IMR-90 (cell line): ENCODE measurements at regions of chr3 and their contacts with region 1.

Region 1: DNA sequence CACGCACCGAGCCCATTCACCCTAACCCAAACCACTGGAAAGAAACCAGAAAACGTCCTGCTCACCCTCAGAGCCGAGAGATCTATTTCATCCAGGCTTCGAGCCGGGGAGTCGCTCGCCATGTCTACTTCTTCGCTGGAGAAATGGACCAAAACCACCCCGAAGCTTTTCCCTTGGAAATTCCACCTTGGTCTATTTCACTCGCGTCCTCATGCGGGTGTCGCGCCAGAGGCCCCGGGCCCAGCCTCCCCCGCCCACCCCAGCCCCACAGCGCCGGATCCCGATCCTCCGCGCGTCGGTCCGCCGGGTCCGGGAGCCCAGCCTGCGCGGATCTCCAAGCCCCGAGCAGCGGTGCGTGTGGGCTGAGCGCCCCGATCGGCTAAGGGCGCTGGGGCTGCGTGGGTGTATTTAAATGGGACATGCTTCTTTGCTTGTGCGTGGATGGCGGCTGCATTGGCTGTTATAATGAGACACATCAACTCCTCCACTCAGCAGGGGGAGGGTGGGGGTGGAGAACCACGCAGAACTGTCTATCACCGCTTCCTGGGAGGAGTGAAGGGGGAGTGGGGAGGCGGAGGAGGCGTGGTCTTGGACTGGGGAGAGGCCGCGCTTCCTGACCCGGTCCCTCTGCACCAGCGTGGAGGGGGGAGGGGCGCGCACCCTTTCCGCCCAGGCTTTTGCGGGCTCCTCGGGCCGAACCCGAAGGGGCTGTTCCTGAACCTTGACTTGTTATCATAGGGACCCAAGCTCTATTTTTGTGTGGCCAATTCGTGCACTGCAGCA is at the start of gene TNIK:
- DNase-seq: peak; percentile 89
- ATAC-seq: peak; percentile 94
- H3K4me3 ChIP-seq: peak within 1 kb of the TSS; percentile 86
- H3K27ac ChIP-seq: peak within 1 kb of the TSS; percentile 62
- H3K4me1 ChIP-seq: peaks cover 3% of the 10 kb centered on the region
- H3K27me3 ChIP-seq: no peaks in the 10 kb centered on the region
- CTCF ChIP-seq: 0 out of 2 replicates have a peak, but pooled peaks have one; percentile 10
- POLR2A ChIP-seq: no peak; the same call in 1 of the 2 replicates
- RAD21 ChIP-seq: no peak; the same call in 1 of the 2 replicates
- total RNA-seq, gene TNIK: 6.3 and 8.3 TPM in 2 replicates

Region 2: DNA sequence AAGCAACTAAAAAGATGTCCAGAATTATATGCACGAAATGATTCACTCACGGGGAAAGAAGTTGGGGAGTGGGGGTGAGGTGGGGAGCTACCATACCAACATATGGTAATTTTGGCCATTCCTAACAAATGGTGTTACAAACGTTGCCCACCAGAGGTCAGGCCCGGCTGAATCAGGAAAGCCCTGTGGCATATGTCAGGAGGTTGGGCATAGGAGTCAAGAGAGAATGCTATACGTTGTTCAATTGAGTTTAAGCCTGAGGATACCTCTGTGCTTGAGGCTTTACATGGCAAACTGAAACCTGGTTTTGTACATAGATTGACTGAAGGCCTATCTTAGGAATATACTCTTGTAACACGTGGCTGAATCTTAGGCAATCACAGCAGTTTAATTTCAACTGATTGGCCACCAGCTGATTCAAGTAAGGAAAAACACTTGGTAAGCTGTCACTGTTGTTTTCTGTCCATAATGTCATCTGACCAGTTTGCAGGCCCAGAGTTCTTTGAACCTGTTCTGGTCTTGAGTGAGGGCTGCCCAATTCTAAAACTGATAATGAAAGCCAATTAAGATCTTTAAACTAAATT is 410.2 kb before region 1 on chr3:
- CTCF ChIA-PET with region 1: no interaction called
- POLR2A ChIA-PET with region 1: no interaction called
- dilution Hi-C with region 1: no loop called
- in situ Hi-C with region 1: no loop called
- intact Hi-C with region 1: loop called (anchors 5 kb)
- DNase-seq: peak; percentile 61
- ATAC-seq: peak; percentile 91
- H3K4me3 ChIP-seq: no peak overlapping the region
- H3K27ac ChIP-seq: no peak overlapping the region
- H3K4me1 ChIP-seq: peaks cover 4% of the 10 kb centered on the region; the same call in 1 of the 2 replicates
- H3K27me3 ChIP-seq: no peaks in the 10 kb centered on the region
- CTCF ChIP-seq: peak; percentile 76
- POLR2A ChIP-seq: no peak
- RAD21 ChIP-seq: peak; percentile 84

Region 3: DNA sequence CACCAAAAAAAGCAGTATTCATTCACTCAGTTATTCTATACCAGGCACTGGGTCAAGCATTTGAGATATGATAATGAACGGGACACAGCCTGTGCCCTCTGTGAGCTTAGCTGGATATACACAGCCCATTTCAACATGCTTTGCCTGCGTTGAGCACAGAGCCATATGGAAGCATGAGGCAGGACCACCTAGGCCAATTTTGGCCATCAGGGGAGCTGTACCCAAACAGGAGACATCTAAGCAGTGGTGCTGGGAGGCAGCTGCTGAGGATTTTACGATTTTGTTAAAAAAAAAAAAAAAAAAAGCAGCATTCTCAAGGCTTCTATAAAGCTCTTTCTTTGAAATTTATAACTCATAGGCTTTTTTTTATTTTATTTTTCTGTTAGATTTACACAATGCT is 346.4 kb before region 1 on chr3:
- CTCF ChIA-PET with region 1: no interaction called
- POLR2A ChIA-PET with region 1: no interaction called
- dilution Hi-C with region 1: no loop called
- in situ Hi-C with region 1: no loop called
- intact Hi-C with region 1: no loop called
- DNase-seq: no peak
- ATAC-seq: no peak
- H3K4me3 ChIP-seq: no peak overlapping the region
- H3K27ac ChIP-seq: no peak overlapping the region
- H3K4me1 ChIP-seq: no peaks in the 10 kb centered on the region
- H3K27me3 ChIP-seq: no peaks in the 10 kb centered on the region
- CTCF ChIP-seq: no peak
- POLR2A ChIP-seq: no peak
- RAD21 ChIP-seq: no peak

Region 4: DNA sequence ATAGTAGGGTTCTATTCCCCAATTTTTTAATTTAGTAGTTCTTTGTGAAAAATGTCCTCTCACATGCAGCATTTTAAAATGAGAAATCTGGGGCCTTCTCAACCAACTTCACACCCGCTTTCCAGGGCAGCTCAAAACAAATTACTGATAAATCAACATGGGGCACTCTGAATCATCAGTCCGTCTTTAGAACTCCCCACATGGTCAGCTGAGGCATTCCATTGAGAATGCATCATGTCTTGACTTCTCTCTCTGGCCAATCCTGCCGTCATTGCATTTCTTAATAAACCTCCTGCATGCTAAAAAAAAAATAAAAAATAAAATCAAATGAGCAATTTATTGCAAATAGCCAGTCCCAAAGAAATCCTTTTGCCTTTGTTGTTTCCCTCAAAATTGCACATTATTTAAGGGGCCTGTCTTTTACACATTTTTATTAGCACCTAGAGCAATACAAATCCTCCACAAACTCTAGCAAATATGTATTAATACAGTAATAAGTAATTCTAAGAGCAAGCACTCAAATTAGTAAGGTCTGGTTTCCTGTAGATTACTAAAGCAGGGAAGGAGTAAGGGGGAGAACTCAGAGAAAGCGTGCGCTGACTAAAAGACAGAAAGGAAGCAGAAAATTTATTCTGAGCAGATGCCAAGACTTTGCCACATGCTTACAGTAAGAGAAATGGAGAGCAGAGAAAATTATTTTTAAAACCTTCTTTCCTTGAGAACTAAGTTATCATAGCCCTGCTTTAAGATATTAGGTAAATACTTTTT is 175.6 kb before region 1 on chr3:
- CTCF ChIA-PET with region 1: no interaction called
- POLR2A ChIA-PET with region 1: no interaction called
- dilution Hi-C with region 1: no loop called
- in situ Hi-C with region 1: no loop called
- intact Hi-C with region 1: loop called (anchors 2 kb)
- DNase-seq: peak; percentile 98
- ATAC-seq: peak; percentile 95
- H3K4me3 ChIP-seq: no peak overlapping the region
- H3K27ac ChIP-seq: peak overlapping the region; percentile 13; the same call in 1 of the 2 replicates
- H3K4me1 ChIP-seq: peaks cover 9% of the 10 kb centered on the region
- H3K27me3 ChIP-seq: no peaks in the 10 kb centered on the region
- CTCF ChIP-seq: no peak
- POLR2A ChIP-seq: no peak
- RAD21 ChIP-seq: no peak

Region 5: GRCh38 chr3:171526869-171527268 is 66.7 kb after region 1 on chr3:
- CTCF ChIA-PET with region 1: no interaction called
- POLR2A ChIA-PET with region 1: interaction called, 14 read pairs
- dilution Hi-C with region 1: no loop called
- in situ Hi-C with region 1: no loop called
- intact Hi-C with region 1: no loop called
- DNase-seq: peak; percentile 87
- ATAC-seq: peak; percentile 80
- H3K4me3 ChIP-seq: no peak overlapping the region
- H3K27ac ChIP-seq: peak overlapping the region; percentile 84; the same call in 1 of the 2 replicates
- H3K4me1 ChIP-seq: peaks cover 23% of the 10 kb centered on the region
- H3K27me3 ChIP-seq: no peaks in the 10 kb centered on the region
- CTCF ChIP-seq: no peak
- POLR2A ChIP-seq: no peak
- RAD21 ChIP-seq: peak; percentile 15; the same call in 1 of the 2 replicates

Region 6: DNA sequence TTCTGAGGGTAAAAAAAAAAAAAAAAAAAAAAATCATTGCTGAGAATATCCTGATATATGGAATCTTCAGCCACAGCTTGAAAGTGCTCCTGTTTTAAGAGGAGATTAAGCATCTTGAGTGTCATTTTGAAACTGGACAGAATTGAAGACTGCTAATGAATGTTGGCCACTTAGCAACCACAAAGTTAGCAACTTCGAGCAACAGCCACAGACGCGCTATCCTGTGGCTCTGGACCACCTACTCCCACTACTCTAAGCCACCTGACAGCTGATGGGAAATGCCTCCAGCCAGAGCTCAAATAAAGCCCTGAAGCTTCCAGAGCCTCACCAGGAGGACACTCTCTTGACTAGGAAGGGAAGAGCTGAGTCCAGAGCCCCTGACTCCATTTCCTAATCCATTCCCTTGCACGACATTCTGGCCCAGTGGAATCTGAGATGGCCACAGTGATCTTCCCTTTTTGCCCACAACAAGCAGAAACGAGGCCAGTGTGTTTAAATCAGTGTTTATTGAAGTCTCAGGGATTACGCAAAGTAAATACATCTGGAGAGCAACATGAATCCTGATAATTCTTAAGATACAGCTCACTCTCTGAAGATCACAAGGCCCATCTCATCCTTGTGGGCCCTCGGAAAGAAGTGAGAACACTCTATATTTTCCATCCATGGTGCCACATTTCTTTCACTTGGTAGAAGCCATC is 441.6 kb after region 1 on chr3:
- CTCF ChIA-PET with region 1: no interaction called
- POLR2A ChIA-PET with region 1: no interaction called
- dilution Hi-C with region 1: no loop called
- in situ Hi-C with region 1: no loop called
- intact Hi-C with region 1: no loop called
- DNase-seq: peak; percentile 84
- ATAC-seq: peak; percentile 89
- H3K4me3 ChIP-seq: no peak overlapping the region
- H3K27ac ChIP-seq: peak overlapping the region; percentile 69
- H3K4me1 ChIP-seq: peaks cover 10% of the 10 kb centered on the region
- H3K27me3 ChIP-seq: no peaks in the 10 kb centered on the region
- CTCF ChIP-seq: no peak
- POLR2A ChIP-seq: no peak
- RAD21 ChIP-seq: no peak